ENCODE measurements at regions of chr19 and their contacts with region 1.

Region 1: DNA sequence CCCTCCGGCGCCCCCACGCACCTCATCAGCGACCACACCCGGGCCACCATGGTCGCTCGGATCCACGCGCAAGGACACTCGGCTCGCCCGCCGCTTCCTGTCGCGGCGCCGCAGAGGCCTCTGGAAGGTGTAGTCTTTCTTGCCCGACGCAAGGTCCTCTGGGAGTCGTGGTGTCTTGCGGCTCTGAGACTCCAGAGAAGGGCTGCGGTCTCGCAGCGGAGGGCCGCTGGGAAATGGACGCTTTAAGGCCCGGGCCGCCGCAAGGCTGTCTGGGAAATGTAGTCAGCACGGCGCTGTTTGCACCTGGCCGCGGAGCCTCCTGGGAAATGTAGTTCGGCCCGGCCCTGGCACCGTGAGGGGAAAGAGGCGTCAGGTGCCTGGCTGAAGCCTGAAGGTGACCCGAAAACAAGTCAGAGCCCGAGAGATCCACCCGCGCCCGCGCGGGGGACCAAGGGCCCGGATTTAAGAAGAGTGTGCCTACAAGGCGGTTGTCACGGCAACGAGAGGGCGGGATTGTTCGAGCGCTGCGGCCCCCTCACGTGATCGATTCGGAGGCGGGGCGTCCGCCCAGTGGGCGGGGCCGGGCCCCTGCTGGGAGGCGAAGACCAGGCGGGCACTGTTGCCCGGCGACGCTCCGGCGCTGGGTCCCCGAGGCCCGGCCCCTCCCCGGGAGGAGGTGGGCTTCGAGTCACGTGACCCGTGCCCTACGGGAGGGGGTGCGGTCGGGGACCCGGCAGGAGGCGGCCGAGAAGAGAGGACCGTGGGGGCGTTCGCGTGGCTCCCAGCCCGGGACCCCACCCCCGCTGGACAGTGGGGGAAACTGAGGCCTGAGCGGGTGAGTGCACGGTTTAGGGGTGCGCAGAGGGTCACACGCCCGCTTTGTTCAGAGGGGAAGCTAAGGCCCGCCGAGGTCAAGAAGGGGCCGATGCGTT is at the starts of genes HSD11B1L and MICOS13:
- DNase-seq: peak; percentile 99 to 100
- ATAC-seq: peak; percentile 92 to 97 (median 92)
- H3K4me3 ChIP-seq: peak within 1 kb of the TSS; percentile 95
- H3K4me3 Mint-ChIP-seq: peak within 1 kb of the TSS; percentile 98
- H3K27ac ChIP-seq: peak within 1 kb of the TSS; percentile 97
- H3K27ac Mint-ChIP-seq: peak within 1 kb of the TSS; percentile 99 to 100
- H3K4me1 ChIP-seq: peaks cover 17% of the 10 kb centered on the region
- H3K4me1 Mint-ChIP-seq: peaks cover 15 to 38% of the 10 kb centered on the region in 2 donors
- H3K27me3 ChIP-seq: no peaks in the 10 kb centered on the region
- H3K27me3 Mint-ChIP-seq: no peaks in the 10 kb centered on the region
- CTCF ChIP-seq: no peak
- total RNA-seq, gene HSD11B1L: 1.1 to 3.7 (median 3.0) TPM
- total RNA-seq, gene MICOS13: 17.7 to 27.7 (median 25.1) TPM

Region 2: GRCh38 chr19:5622463-5623396 is 58.0 kb before region 1 on chr19 and contains the starts of genes SAFB and SAFB2:
- intact Hi-C with region 1: loop called (anchors 2 kb)
- DNase-seq: peak; percentile 99 to 100
- ATAC-seq: peak; percentile 85 to 92 (median 85)
- H3K4me3 ChIP-seq: peak within 1 kb of the TSS; percentile 99
- H3K4me3 Mint-ChIP-seq: peak within 1 kb of the TSS; percentile 99
- H3K27ac ChIP-seq: peak within 1 kb of the TSS; percentile 99
- H3K27ac Mint-ChIP-seq: peak within 1 kb of the TSS; percentile 99 to 100
- H3K4me1 ChIP-seq: peaks cover 66% of the 10 kb centered on the region
- H3K4me1 Mint-ChIP-seq: peaks cover 83% of the 10 kb centered on the region in 2 donors
- H3K27me3 ChIP-seq: no peaks in the 10 kb centered on the region
- H3K27me3 Mint-ChIP-seq: no peaks in the 10 kb centered on the region
- CTCF ChIP-seq: no peak
- total RNA-seq, gene SAFB: 195 to 229 (median 207) TPM
- total RNA-seq, gene SAFB2: 232 to 264 (median 258) TPM

Region 3: DNA sequence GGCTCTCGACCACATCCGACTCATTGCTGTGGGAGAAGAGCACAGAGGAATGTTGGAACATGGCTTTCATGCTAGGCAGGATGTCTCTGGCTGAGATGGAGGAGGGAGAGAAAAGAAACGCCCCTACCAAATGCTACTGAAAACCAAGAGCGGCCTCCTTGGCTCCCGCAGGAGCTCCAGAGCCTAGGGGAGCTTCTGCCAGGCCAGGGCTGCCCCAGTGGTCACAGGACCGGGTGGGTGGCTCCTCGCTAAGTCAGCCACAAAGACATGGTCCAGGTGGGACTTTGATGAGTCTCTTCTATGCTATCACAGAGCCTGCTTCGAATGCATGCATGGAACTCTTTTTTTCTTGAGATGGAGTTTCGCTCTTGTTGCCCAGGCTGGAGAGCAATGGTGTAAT is 32.5 kb after region 1 on chr19:
- intact Hi-C with region 1: no loop called
- DNase-seq: no peak
- ATAC-seq: no peak
- H3K4me3 ChIP-seq: no peak overlapping the region
- H3K4me3 Mint-ChIP-seq: no peak overlapping the region
- H3K27ac ChIP-seq: no peak overlapping the region
- H3K27ac Mint-ChIP-seq: no peak overlapping the region
- H3K4me1 ChIP-seq: peaks cover 8% of the 10 kb centered on the region
- H3K4me1 Mint-ChIP-seq: peaks cover 0 to 5% of the 10 kb centered on the region in 2 donors
- H3K27me3 ChIP-seq: no peaks in the 10 kb centered on the region
- H3K27me3 Mint-ChIP-seq: no peaks in the 10 kb centered on the region
- CTCF ChIP-seq: no peak

Region 4: DNA sequence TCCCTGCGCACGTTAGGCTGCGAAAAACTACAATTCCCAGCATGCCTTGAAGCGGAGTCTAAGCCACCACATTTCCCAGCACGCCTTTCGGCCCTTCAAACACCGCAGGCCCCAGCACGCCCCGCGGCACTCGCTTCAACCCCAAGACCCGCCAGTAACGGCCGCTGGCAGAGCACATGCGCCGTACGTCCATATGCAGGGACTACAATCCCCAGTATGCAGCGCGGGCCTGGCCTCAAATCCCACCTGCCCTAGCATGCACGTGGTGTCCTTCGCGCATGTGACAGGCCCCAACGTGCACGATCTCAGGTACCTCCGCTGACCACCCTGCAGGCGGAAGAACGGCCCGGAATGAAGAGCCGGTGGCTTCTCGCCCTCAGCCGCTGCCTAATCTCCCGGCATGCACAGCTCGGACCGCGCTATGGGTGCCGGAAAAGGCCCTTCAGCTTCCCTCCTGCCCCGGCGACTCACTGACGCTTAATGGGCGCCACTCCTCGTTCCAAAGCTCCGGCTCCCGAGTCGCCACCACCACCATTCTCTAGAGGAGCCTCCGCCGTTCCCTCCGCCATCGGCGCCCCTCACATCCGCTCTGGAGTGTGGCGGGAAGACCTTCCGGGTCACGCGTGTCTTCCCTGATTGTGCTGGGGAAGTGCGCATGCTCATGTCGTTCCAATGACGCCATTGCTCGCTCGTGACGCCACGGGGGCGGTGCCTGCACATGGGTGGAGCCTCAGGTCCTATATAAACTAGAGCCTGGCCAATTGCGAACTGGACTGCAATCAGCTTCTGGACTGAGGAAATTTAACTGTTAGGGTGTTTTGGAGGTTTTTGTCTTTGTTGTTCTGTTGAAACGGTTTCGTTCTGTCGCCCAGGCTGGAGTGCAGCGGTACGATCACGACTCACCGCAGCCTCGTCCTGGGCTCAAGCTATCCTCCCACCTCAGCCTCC is 110.1 kb after region 1 on chr19 and contains the start of gene DUS3L:
- intact Hi-C with region 1: loop called (anchors 2 kb)
- DNase-seq: peak; percentile 95 to 98
- ATAC-seq: peak; percentile 90 to 98 (median 92)
- H3K4me3 ChIP-seq: peak within 1 kb of the TSS; percentile 96
- H3K4me3 Mint-ChIP-seq: peak within 1 kb of the TSS; percentile 100
- H3K27ac ChIP-seq: peak within 1 kb of the TSS; percentile 99
- H3K27ac Mint-ChIP-seq: peak within 1 kb of the TSS; percentile 100
- H3K4me1 ChIP-seq: peaks cover 18% of the 10 kb centered on the region
- H3K4me1 Mint-ChIP-seq: peaks cover 14 to 22% of the 10 kb centered on the region in 2 donors
- H3K27me3 ChIP-seq: no peaks in the 10 kb centered on the region
- H3K27me3 Mint-ChIP-seq: peaks cover 0 to 3% of the 10 kb centered on the region in 2 donors
- CTCF ChIP-seq: no peak
- total RNA-seq, gene DUS3L: 116 to 140 (median 128) TPM